Activated CD4-positive, alpha-beta T cell treated with anti-CD3 and anti-CD28 coated beads, Interleukin-2, amount 10 ng/mL, durations not matched to agents 24 days and 14 days (primary cell): ENCODE measurements at regions of chr12 and their contacts with region 1.

Region 1: DNA sequence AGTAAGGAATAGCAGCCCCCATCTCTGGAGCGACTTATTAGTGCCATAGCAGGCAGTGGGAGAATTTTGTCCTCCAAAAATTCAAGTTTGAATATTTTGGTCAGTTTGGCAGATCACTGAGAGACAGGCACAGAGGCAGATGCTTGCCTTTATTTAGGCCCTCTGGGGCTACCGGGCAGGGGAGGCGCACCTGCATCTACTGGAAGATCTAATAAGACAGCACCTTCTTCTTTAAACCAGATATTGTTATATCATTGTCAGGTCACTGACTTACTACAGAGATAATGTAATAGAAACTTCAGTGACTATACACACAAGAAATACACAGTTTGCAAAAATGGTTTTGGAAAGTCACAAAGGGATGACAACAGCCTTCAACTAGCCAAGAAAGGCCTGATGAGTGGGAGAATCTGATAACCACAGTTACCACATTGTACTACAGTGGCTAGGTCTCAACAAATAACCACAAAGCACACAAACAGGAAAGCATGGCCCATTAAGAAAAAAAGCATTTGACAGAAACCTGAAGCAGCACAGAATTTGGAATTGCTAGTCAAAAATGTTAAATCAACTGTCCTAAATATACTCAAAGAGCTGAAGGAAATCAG is 56.8 kb downstream of the CDK17 start:
- DNase-seq: peak; percentile 75
- H3K4me3 Mint-ChIP-seq: peak overlapping the region; percentile 42
- H3K27ac Mint-ChIP-seq: peak overlapping the region; percentile 35
- H3K4me1 Mint-ChIP-seq: peaks cover 37% of the 10 kb centered on the region
- H3K27me3 Mint-ChIP-seq: no peaks in the 10 kb centered on the region

Region 2: DNA sequence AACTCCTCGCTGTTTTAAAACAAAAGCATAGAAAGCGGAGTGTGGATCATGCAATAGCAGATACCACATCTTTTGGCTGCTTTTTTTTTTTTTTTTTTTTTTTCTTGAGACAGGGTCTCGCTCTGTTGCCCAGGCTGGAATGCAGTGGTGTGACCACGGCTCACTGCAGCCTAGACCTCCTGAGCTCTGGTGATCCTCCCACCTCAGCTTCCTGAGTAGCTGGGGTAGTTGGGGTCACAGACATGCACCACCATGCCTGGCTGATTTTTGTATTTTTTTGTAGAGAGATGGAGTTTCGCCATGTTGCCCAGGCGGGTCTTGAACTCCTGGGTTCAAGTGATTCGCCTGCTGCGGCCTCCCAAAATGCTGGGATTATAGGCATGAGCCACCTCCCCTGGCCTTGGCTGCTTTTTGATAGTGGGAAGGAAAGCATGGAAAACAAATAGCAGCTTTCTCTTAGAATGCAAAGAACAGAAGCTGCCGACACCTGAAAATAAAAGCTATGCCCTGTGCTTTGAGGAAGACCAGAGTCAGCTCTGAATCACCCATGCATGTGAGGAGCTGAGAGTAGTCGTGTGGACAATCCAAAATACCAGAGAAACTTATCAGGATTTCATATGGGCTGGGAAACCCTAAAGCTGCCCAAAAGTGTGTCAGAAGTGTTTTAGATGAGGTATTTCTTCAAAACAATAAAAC is 152.9 kb before region 1 on chr12:
- intact Hi-C with region 1: no loop called
- DNase-seq: no peak
- H3K4me3 Mint-ChIP-seq: no peak overlapping the region
- H3K27ac Mint-ChIP-seq: no peak overlapping the region
- H3K4me1 Mint-ChIP-seq: peaks cover 33% of the 10 kb centered on the region
- H3K27me3 Mint-ChIP-seq: no peaks in the 10 kb centered on the region

Region 3: GRCh38 chr12:96314723-96315122 is 28.7 kb before region 1 on chr12:
- intact Hi-C with region 1: loop called (anchors 5 kb)
- DNase-seq: no peak
- H3K4me3 Mint-ChIP-seq: no peak overlapping the region
- H3K27ac Mint-ChIP-seq: no peak overlapping the region
- H3K4me1 Mint-ChIP-seq: peaks cover 13% of the 10 kb centered on the region
- H3K27me3 Mint-ChIP-seq: no peaks in the 10 kb centered on the region

Region 4: GRCh38 chr12:96361074-96361473 is 17.6 kb after region 1 on chr12:
- intact Hi-C with region 1: loop called (anchors 2 kb)
- DNase-seq: no peak
- H3K4me3 Mint-ChIP-seq: no peak overlapping the region
- H3K27ac Mint-ChIP-seq: no peak overlapping the region
- H3K4me1 Mint-ChIP-seq: peaks cover 29% of the 10 kb centered on the region
- H3K27me3 Mint-ChIP-seq: no peaks in the 10 kb centered on the region

Region 5: GRCh38 chr12:96375841-96376604 is 32.6 kb after region 1 on chr12:
- intact Hi-C with region 1: loop called (anchors 5 kb)
- DNase-seq: no peak
- H3K4me3 Mint-ChIP-seq: peak overlapping the region; percentile 2
- H3K27ac Mint-ChIP-seq: peak overlapping the region; percentile 26
- H3K4me1 Mint-ChIP-seq: peaks cover 52% of the 10 kb centered on the region
- H3K27me3 Mint-ChIP-seq: no peaks in the 10 kb centered on the region